Heart left ventricle (tissue), 16 donors: ENCODE measurements at regions of chr18 and their contacts with region 1.

Region 1: GRCh38 chr18:8478166-8478967 is 130.9 kb upstream of the RAB12 start:
- DNase-seq: peak; percentile 27 to 79 (median 37)
- ATAC-seq: peak; percentile 38 to 73 (median 60)
- H3K4me3 ChIP-seq: no peak overlapping the region
- H3K27ac ChIP-seq: no peak overlapping the region
- H3K4me1 ChIP-seq: peaks cover 0 to 6% (median 0%) of the 10 kb centered on the region in 12 donors
- H3K27me3 ChIP-seq: no peaks in the 10 kb centered on the region
- CTCF ChIP-seq: peak; percentile 63 to 80 (median 72)
- POLR2A ChIP-seq: no peak

Region 2: DNA sequence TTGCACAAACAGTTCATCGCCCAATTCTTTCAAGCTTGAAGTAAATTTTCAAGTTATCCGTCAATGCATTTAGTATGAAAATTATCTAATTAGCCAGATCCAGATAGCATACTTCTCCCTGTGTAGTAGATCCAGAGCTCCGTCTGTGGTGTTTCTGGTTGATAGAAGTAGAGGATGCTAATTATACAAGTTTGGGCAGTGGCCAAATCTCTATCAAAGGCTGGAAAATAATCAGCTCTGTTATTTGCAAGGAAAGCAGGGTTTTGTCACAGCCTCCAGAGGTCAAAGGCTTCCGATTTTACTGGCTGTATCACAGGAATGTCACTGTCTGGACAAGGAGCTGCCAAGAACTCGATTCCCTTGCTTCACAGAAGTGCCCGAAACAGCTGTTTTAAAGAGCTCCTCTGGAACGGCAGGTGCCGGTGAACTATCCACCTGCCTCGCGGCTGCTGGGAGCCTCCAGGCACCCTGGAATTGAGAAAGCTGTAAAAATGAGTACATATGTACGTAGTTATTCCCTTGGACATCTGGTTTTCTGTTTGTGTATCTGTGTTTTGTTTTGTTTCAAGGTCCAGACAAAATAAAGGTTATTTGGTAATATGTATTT is 1218.8 kb before region 1 on chr18:
- intact Hi-C with region 1: loop called in 1 of 10 experiments (anchors 10 kb)
- DNase-seq: no peak
- ATAC-seq: peak in 3 of 4 donors; percentile 21 to 27 (median 23)
- H3K4me3 ChIP-seq: no peak overlapping the region
- H3K27ac ChIP-seq: peak overlapping the region in 4 of 12 donors; percentile 7 to 46 (median 28)
- H3K4me1 ChIP-seq: peaks cover 0 to 31% (median 12%) of the 10 kb centered on the region in 12 donors
- H3K27me3 ChIP-seq: no peaks in the 10 kb centered on the region
- CTCF ChIP-seq: no peak
- POLR2A ChIP-seq: no peak

Region 3: DNA sequence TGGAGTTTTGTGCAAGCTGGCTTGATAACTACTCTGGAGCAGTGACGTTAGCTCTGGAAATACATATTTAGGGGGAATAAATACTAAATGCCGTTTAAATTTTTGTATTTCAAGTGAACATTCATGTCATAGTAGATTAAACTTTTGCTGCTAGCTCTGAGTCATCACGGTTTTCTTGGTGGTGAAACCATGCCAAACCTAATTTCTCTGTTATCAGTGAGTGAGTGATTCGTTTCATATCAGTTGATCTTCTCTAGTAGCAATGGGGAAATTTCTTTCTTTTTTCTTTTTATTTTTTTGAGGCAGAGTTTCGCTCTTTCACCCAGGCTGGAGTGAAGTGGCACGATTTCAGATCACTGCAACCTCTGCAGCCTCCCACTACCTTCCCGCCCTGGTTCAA is 700.2 kb before region 1 on chr18:
- intact Hi-C with region 1: loop called in 1 of 10 experiments (anchors 10 kb)
- DNase-seq: no peak
- ATAC-seq: no peak
- H3K4me3 ChIP-seq: no peak overlapping the region
- H3K27ac ChIP-seq: no peak overlapping the region
- H3K4me1 ChIP-seq: peaks cover 0 to 28% (median 9%) of the 10 kb centered on the region in 12 donors
- H3K27me3 ChIP-seq: no peaks in the 10 kb centered on the region
- CTCF ChIP-seq: no peak
- POLR2A ChIP-seq: no peak

Region 4: DNA sequence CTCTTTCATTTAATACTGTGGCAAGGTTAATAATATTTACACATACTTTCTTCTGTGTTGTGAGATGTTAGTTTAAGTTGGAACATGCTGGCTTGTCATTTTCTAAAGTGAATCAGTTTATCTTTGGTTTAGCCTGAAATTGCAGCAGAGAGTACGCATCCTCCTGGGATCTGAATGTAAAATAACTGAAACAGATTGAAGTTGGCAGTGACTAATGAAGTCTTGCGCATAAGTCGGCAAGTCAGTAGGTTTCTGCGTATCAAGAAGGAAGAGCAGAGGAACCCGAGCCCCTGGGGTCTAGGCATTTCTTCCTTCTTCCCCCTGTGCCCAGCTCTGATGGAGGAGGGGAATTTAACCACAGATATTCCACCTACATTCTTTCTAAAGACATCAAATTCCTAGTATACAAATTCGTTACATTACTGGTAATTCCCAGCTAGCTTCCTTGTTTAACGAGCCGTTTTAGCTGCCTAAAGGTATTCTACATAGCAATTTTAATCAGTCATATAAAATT is 261.3 kb before region 1 on chr18:
- intact Hi-C with region 1: loop called in 1 of 10 experiments (anchors 5 kb)
- DNase-seq: no peak
- ATAC-seq: no peak
- H3K4me3 ChIP-seq: no peak overlapping the region
- H3K27ac ChIP-seq: no peak overlapping the region
- H3K4me1 ChIP-seq: peaks cover 0 to 26% (median 4%) of the 10 kb centered on the region in 12 donors
- H3K27me3 ChIP-seq: no peaks in the 10 kb centered on the region
- CTCF ChIP-seq: no peak
- POLR2A ChIP-seq: no peak

Region 5: GRCh38 chr18:8584798-8585197 is 106.4 kb after region 1 on chr18:
- intact Hi-C with region 1: no loop called
- DNase-seq: no peak
- ATAC-seq: no peak
- H3K4me3 ChIP-seq: no peak overlapping the region
- H3K27ac ChIP-seq: no peak overlapping the region
- H3K4me1 ChIP-seq: no peaks in the 10 kb centered on the region
- H3K27me3 ChIP-seq: peaks cover 0 to 12% (median 0%) of the 10 kb centered on the region in 9 donors
- CTCF ChIP-seq: no peak
- POLR2A ChIP-seq: no peak